Right cardiac atrium (tissue), 5 donors: ENCODE measurements at regions of chr10 and their contacts with region 1.

Region 1: DNA sequence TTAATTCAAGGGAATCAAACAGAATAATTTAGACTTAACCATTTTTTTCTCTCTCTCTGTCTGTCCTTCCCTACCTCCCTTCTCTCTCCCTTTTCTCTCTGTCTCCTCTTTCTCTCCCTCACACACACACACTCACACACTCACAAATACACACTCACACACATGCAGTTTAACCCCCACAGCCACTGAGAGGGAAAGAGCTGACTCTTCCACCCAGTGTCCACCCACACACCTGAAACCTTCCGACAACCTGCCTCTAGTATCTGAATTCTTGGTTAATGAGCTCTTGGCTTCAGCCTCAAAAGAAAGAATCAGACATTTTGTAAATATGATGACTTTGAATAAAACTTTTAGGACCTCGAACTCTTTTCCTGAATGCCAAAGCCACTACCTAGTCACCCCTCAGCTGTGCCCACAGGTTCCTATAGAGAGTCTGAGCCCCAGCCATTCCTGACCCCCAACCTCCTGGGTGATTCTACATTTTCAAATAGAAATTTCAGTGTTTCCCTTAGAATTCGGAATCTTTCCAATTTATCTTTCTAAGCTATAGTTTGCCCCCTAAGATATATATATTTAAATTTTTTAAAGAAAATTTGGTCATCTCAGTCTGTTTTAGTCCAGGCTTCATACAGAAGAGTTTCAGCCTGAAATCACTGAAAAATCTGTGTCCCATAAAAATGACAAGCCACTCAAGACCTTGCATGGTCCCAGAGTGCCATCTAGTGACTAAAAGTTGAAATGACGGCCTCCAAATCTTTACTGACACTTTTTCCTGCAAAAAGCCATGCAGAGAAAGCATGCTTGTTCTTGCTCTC is 202.8 kb downstream of the IPMK start:
- DNase-seq: no peak
- ATAC-seq: no peak
- H3K4me3 ChIP-seq: no peak overlapping the region
- H3K27ac ChIP-seq: no peak overlapping the region
- H3K4me1 ChIP-seq: no peaks in the 10 kb centered on the region
- H3K27me3 ChIP-seq: no peaks in the 10 kb centered on the region

Region 2: GRCh38 chr10:57338823-57339558 is 725.9 kb before region 1 on chr10:
- intact Hi-C with region 1: loop called in 3 of 4 experiments (anchors 5 to 10 kb)
- DNase-seq: no peak
- ATAC-seq: no peak
- H3K4me3 ChIP-seq: no peak overlapping the region
- H3K27ac ChIP-seq: no peak overlapping the region
- H3K4me1 ChIP-seq: no peaks in the 10 kb centered on the region
- H3K27me3 ChIP-seq: no peaks in the 10 kb centered on the region

Region 3: GRCh38 chr10:57579926-57580325 is 485.0 kb before region 1 on chr10:
- intact Hi-C with region 1: loop called in 2 of 4 experiments (anchors 5 to 10 kb)
- DNase-seq: no peak
- ATAC-seq: peak in 1 of 2 donors; percentile 50
- H3K4me3 ChIP-seq: no peak overlapping the region
- H3K27ac ChIP-seq: no peak overlapping the region
- H3K4me1 ChIP-seq: no peaks in the 10 kb centered on the region
- H3K27me3 ChIP-seq: no peaks in the 10 kb centered on the region

Region 4: GRCh38 chr10:57628592-57629284 is 436.2 kb before region 1 on chr10:
- intact Hi-C with region 1: no loop called
- DNase-seq: no peak
- ATAC-seq: no peak
- H3K4me3 ChIP-seq: no peak overlapping the region
- H3K27ac ChIP-seq: no peak overlapping the region
- H3K4me1 ChIP-seq: no peaks in the 10 kb centered on the region
- H3K27me3 ChIP-seq: no peaks in the 10 kb centered on the region

Region 5: GRCh38 chr10:57716886-57717285 is 348.0 kb before region 1 on chr10:
- intact Hi-C with region 1: loop called in 1 of 4 experiments (anchors 10 kb)
- DNase-seq: no peak
- ATAC-seq: no peak
- H3K4me3 ChIP-seq: no peak overlapping the region
- H3K27ac ChIP-seq: no peak overlapping the region
- H3K4me1 ChIP-seq: no peaks in the 10 kb centered on the region
- H3K27me3 ChIP-seq: no peaks in the 10 kb centered on the region

Region 6: GRCh38 chr10:57754803-57755202 is 310.1 kb before region 1 on chr10:
- intact Hi-C with region 1: no loop called
- DNase-seq: no peak
- ATAC-seq: no peak
- H3K4me3 ChIP-seq: no peak overlapping the region
- H3K27ac ChIP-seq: no peak overlapping the region
- H3K4me1 ChIP-seq: no peaks in the 10 kb centered on the region
- H3K27me3 ChIP-seq: no peaks in the 10 kb centered on the region